CD4-positive, alpha-beta T cell (primary cell): ENCODE measurements at regions of chr5 and their contacts with region 1.

Region 1: DNA sequence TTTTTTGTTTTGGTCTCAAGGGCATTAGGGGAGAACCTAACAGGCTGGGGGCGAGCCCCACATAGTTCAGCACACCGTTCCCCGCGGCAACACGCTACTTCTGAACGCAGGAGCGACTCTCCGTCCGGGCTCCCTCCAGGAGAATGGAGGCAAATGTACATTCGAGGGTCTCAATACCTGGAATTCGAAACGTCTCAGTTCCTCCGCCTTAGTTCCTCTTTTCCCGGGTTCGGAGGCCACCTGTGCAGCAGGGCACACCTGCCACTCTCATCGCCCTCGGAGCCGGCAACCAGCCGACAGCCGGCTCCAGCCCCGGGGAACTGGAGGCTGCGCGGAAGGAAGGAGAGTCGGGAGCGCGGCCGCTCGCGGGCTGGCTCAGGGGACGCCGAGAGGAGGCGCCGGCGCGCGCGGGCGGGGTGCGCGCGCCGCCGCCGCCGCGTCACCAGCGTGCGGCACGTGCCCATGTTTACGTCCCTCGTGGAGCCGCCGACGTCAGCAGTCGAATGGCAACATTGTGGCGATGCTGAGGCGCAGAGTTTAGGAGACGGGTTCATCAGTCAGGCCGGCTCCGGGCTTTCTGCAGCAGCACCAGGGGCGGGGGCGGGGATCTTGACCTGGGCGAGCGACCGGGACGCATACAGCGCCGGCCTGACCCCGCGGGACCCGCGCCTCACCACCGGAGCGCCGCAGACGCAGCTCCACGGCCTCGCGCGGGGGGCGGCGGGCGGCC is at the start of gene JMY:
- DNase-seq: peak; percentile 72 to 94 (median 84)
- ATAC-seq: peak; percentile 86
- H3K4me3 ChIP-seq: peak within 1 kb of the TSS; percentile 65
- H3K4me3 Mint-ChIP-seq: peak within 1 kb of the TSS; percentile 97
- H3K27ac ChIP-seq: peak within 1 kb of the TSS; percentile 79 to 89
- H3K27ac Mint-ChIP-seq: peak within 1 kb of the TSS; percentile 96
- H3K4me1 ChIP-seq: peaks cover 26% of the 10 kb centered on the region
- H3K4me1 Mint-ChIP-seq: peaks cover 30% of the 10 kb centered on the region
- H3K27me3 ChIP-seq: no peaks in the 10 kb centered on the region
- H3K27me3 Mint-ChIP-seq: no peaks in the 10 kb centered on the region
- CTCF ChIP-seq: no peak
- total RNA-seq, gene JMY: 73.3 to 73.5 TPM

Region 2: GRCh38 chr5:77491783-77492652 is 1743.8 kb before region 1 on chr5 and contains the start of gene WDR41:
- CTCF ChIA-PET with region 1: no interaction called
- POLR2A ChIA-PET with region 1: interaction called, 5 read pairs
- intact Hi-C with region 1: loop called in 1 of 2 experiments (anchors 5 kb)
- DNase-seq: peak; percentile 66 to 94 (median 82)
- ATAC-seq: peak; percentile 92
- H3K4me3 ChIP-seq: peak within 1 kb of the TSS; percentile 95
- H3K4me3 Mint-ChIP-seq: peak within 1 kb of the TSS; percentile 96
- H3K27ac ChIP-seq: peak within 1 kb of the TSS; percentile 70 to 72
- H3K27ac Mint-ChIP-seq: peak within 1 kb of the TSS; percentile 69
- H3K4me1 ChIP-seq: peaks cover 11% of the 10 kb centered on the region
- H3K4me1 Mint-ChIP-seq: peaks cover 24% of the 10 kb centered on the region
- H3K27me3 ChIP-seq: no peaks in the 10 kb centered on the region
- H3K27me3 Mint-ChIP-seq: peaks cover 33% of the 10 kb centered on the region
- CTCF ChIP-seq: peak; percentile 91
- total RNA-seq, gene WDR41: 4.2 to 4.4 TPM

Region 3: DNA sequence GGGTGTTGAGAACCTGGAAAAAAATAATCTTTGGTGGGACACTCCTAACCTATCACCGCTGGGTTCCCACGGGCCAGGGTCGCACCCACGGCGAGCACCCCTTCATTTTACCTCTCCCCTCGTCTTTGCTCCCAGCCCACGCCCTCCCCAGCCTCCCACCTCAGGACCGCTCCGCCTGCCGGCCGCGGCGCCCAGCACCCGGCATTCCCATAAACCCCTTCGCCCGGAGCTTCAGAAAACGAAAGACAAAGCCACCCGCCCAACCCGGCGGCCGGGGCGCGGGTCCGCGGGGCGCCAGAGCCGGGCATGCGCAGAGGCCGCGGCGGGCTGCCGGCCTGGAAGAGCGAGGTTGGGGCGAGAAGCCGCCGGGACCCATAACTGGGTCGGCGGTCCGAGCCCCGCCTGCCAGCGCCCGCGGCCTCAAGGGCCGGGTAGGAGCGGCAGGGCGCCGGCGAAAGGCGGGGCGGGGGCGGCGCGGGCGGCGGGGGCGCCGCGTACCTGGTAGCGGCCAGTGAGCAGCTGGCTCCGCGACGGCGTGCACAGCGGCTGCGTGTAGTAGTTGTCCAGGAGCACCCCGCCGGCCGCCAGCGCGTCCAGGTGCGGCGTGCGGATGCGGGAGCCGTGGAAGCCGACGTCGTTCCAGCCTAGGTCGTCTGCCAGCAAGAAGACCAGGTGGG is 251.2 kb before region 1 on chr5:
- CTCF ChIA-PET with region 1: no interaction called
- POLR2A ChIA-PET with region 1: interaction called, 22 read pairs
- intact Hi-C with region 1: loop called in 1 of 2 experiments (anchors 5 kb)
- DNase-seq: peak; percentile 49 to 90 (median 70)
- ATAC-seq: peak; percentile 76
- H3K4me3 ChIP-seq: peak overlapping the region; percentile 68
- H3K4me3 Mint-ChIP-seq: peak overlapping the region; percentile 97
- H3K27ac ChIP-seq: peak overlapping the region; percentile 51 to 77
- H3K27ac Mint-ChIP-seq: peak overlapping the region; percentile 98
- H3K4me1 ChIP-seq: peaks cover 14% of the 10 kb centered on the region
- H3K4me1 Mint-ChIP-seq: peaks cover 33% of the 10 kb centered on the region
- H3K27me3 ChIP-seq: no peaks in the 10 kb centered on the region
- H3K27me3 Mint-ChIP-seq: no peaks in the 10 kb centered on the region
- CTCF ChIP-seq: peak; percentile 9

Region 4: DNA sequence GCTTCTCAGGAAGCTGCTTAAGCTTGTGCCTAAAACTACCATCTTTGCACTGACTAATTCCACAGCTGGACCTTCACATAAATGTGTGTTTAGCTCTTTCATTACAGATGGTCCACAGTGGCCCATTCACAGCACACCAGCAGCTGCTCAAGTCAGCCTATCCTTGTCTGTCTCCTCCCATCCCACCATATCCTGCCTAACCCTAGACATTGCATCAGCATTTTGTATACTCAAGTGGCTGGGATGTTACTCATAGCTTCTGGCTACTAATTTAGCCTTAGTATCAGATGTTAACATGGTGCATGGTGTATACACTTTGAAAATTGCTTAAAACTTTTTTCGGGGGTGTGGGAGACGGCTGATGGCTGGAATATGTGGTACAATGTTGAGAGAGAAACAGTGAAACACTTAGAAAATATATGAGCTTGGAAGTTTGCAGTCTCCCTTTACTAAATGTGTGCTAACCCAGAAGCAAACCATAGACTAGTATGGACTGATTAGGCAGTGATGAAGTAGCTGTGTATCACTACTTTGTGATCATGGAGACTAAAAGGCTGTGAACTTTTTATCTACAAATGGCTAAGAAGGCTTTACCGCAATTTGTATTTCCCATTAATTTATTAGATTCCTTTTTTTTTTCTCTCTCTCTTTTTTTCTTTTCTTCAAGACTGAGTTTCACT is 83.3 kb after region 1 on chr5:
- CTCF ChIA-PET with region 1: no interaction called
- POLR2A ChIA-PET with region 1: no interaction called
- intact Hi-C with region 1: loop called in 1 of 2 experiments (anchors 5 kb)
- DNase-seq: no peak
- ATAC-seq: peak; percentile 32
- H3K4me3 ChIP-seq: no peak overlapping the region
- H3K4me3 Mint-ChIP-seq: no peak overlapping the region
- H3K27ac ChIP-seq: no peak overlapping the region
- H3K27ac Mint-ChIP-seq: no peak overlapping the region
- H3K4me1 ChIP-seq: no peaks in the 10 kb centered on the region
- H3K4me1 Mint-ChIP-seq: no peaks in the 10 kb centered on the region
- H3K27me3 ChIP-seq: no peaks in the 10 kb centered on the region
- H3K27me3 Mint-ChIP-seq: no peaks in the 10 kb centered on the region
- CTCF ChIP-seq: no peak

Region 5: GRCh38 chr5:79990598-79991507 is 755.1 kb after region 1 on chr5 and contains the start of gene MTX3:
- CTCF ChIA-PET with region 1: no interaction called
- POLR2A ChIA-PET with region 1: interaction called, 3 read pairs
- intact Hi-C with region 1: loop called in 1 of 2 experiments (anchors 10 kb)
- DNase-seq: peak; percentile 75 to 94 (median 83)
- ATAC-seq: peak; percentile 95
- H3K4me3 ChIP-seq: peak within 1 kb of the TSS; percentile 85
- H3K4me3 Mint-ChIP-seq: peak within 1 kb of the TSS; percentile 88
- H3K27ac ChIP-seq: peak within 1 kb of the TSS; percentile 59 to 68
- H3K27ac Mint-ChIP-seq: peak within 1 kb of the TSS; percentile 92
- H3K4me1 ChIP-seq: peaks cover 17% of the 10 kb centered on the region
- H3K4me1 Mint-ChIP-seq: peaks cover 18% of the 10 kb centered on the region
- H3K27me3 ChIP-seq: no peaks in the 10 kb centered on the region
- H3K27me3 Mint-ChIP-seq: peaks cover 12% of the 10 kb centered on the region
- CTCF ChIP-seq: no peak
- total RNA-seq, gene MTX3: 25.6 to 26.5 TPM

Region 6: GRCh38 chr5:80654391-80655230 is 1418.8 kb after region 1 on chr5 and contains the starts of genes DHFR and MSH3:
- CTCF ChIA-PET with region 1: no interaction called
- POLR2A ChIA-PET with region 1: no interaction called
- intact Hi-C with region 1: loop called in 1 of 2 experiments (anchors 10 kb)
- DNase-seq: peak; percentile 81 to 96 (median 86)
- ATAC-seq: peak; percentile 74
- H3K4me3 ChIP-seq: peak within 1 kb of the TSS; percentile 65
- H3K4me3 Mint-ChIP-seq: peak within 1 kb of the TSS; percentile 92
- H3K27ac ChIP-seq: peak within 1 kb of the TSS; percentile 60 to 78
- H3K27ac Mint-ChIP-seq: peak within 1 kb of the TSS; percentile 95
- H3K4me1 ChIP-seq: peaks cover 20% of the 10 kb centered on the region
- H3K4me1 Mint-ChIP-seq: peaks cover 35% of the 10 kb centered on the region
- H3K27me3 ChIP-seq: no peaks in the 10 kb centered on the region
- H3K27me3 Mint-ChIP-seq: no peaks in the 10 kb centered on the region
- CTCF ChIP-seq: no peak
- total RNA-seq, gene DHFR: 3.6 to 4.0 TPM
- total RNA-seq, gene MSH3: 11.3 to 13.0 TPM